HEK293T (cell line): ENCODE measurements at regions of chr2 and their contacts with region 1.

Region 1: GRCh38 chr2:222690564-222691200 is 19.2 kb downstream of the MOGAT1 start:
- DNase-seq: peak; percentile 87

Region 2: GRCh38 chr2:222468346-222468745 is 222.3 kb before region 1 on chr2:
- CTCF ChIA-PET with region 1: no interaction called
- POLR2A ChIA-PET with region 1: no interaction called
- DNase-seq: no peak

Region 3: DNA sequence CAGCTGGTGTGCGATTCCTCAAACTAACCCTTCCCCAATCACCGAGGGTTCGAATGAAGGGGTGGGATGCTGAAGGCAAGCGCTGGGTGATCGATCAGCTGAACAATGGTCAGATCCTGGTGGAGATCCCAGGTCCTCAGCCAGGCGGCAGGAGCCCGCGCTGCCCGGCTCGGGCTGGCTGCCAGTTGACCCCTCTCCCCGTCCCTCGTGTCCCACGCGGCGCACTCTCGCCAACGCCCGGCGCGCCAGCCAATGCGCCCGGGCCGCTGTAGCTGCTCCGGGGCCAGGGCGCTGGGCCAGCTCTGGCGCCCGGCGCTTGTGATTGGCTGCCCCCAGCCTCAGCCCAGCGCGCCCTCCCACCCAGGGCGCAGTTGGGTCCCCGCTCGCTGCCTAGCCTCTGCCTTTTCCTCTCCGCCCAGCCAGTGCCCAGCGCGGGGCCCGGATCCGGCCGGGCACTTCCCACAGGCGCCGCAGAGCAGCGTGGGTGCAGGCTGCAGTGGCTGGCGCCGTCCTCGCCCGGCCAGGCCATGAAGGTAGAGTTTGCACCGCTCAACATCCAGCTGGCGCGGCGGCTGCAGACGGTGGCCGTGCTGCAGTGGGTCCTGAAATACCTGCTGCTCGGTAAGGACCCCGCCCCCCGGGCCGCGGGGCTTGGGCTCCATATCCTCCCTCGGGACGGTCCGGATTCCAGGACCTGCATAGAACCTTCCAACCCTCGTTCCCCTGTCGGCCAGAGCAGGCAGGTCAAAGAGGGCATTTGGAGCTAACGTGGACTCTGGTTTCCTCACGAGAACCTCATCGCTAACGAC is 19.2 kb before region 1 on chr2 and contains the start of gene MOGAT1:
- CTCF ChIA-PET with region 1: no interaction called
- POLR2A ChIA-PET with region 1: no interaction called
- DNase-seq: no peak

Region 4: DNA sequence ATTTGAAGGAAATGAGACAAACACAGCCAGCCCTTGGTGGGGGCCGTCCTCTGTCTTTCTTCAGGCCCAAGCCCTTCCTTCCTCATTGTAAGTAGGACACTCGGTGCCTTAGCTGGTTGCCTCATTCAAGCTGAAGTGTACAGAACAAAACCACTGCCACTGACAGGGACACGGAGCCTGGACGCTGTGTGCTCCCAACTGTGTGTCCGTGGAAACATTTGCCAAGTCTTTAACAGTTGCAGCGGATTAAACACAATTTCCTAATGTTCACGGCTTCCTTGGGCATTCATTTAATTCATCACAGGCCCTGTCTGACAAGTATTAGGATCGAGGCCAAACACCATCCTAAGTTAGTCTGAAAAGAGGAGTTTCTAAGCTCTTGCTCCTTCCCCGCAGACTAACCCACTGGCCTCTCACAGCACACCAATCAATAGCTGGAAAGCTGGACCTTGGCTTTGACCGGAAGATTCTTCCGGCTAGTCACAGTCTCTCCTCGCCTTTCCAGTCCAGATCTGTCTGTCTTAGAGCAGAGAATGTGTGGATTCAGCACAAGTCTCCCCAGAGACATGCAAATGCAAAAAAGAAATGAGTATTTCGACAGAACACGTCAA is 101.4 kb after region 1 on chr2:
- CTCF ChIA-PET with region 1: no interaction called
- POLR2A ChIA-PET with region 1: no interaction called
- DNase-seq: no peak

Region 5: DNA sequence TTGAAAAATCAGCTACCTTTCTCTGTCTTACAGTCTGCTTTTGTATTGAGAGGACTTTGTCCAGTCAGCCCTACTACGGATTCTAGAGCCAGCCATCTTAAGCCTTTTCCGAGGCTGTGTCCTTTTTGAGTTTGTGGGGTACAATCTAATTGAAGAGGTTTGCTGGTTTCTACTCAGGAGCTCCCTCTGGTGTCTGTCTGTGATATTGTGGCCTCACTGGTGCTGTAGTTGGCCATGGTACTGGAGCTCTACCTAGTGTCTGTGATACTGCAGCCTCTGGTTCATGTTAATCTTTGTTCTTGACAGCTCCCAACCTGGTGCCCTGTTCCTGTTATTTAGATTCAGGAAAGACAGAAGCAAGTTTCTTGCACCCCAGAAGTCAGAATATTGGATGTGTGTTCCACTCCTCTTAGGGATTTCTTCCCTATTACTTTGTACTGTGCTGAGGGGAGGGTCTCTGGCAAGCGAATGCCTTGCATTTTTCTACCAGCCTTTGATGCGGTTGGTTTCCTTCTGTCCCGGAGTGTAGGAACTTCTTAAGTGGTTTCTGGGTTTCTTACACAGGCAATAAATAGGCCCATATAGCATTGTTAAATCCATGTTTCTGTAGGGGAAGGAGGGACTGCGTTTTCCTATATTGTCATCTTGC is 248.7 kb after region 1 on chr2:
- CTCF ChIA-PET with region 1: interaction called, 13 read pairs
- POLR2A ChIA-PET with region 1: no interaction called
- DNase-seq: peak; percentile 58